ENCODE measurements at regions of chr1 and their contacts with region 1.

Region 1: DNA sequence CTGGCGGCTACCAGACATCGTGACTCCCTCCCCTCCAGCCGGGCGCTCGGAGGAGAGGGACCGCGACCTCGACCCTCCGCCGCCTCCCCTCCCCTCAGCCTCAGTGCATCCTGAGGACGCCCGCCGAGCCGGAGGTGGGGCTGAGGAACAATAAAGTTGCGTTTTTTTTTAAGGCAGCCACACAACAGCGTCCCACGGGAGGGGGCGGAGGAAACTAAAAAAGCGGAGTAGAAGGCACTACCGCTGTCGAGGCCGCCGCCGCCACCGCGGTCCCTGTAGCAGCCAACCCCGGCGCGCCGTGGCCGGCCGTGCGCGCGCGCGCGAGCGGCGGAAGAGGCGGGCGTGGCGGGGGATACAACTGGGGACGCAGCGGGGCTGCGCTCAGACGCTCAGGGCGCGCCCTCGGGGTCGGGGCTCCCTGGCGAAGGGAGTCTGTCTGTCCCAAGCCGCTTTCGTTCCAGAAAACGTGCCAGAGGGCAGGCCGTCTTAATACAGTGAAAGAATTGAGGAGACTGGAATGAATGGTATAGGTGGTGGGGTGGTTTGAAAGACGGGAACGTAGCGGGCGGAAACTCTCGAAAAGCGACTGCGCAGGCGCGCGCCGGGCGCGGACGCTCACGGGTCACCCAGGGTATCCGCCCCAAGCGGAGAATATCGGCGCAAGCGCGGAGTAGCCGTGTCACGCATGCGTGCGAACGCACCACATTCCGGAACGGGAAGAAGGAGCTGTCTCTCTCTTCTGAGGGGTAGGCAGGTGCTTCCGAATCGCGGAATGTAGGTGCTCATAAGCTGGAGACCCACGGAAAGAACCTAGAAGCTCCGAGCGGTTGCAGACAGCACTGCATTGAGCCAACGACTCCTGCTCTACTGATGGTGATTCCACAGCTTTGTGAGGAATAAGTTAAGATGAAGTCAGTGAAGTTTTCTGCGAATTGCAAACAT is at the start of gene COP1:
- DNase-seq: peak; percentile 96 to 98
- H3K4me3 ChIP-seq: peak within 1 kb of the TSS; percentile 96
- H3K4me3 Mint-ChIP-seq: peak within 1 kb of the TSS; percentile 87
- H3K27ac Mint-ChIP-seq: peak within 1 kb of the TSS; percentile 95
- H3K4me1 ChIP-seq: peaks cover 8% of the 10 kb centered on the region
- H3K4me1 Mint-ChIP-seq: peaks cover 14% of the 10 kb centered on the region
- H3K27me3 ChIP-seq: no peaks in the 10 kb centered on the region
- H3K27me3 Mint-ChIP-seq: no peaks in the 10 kb centered on the region
- CTCF ChIP-seq: no peak
- total RNA-seq, gene COP1: 45.9 and 46.9 TPM in 2 replicates

Region 2: GRCh38 chr1:175839678-175840669 is 367.3 kb before region 1 on chr1:
- CTCF ChIA-PET with region 1: no interaction called
- POLR2A ChIA-PET with region 1: no interaction called
- intact Hi-C with region 1: loop called (anchors 5 kb)
- DNase-seq: peak; percentile 51 to 75
- H3K4me3 ChIP-seq: peak overlapping the region; percentile 27
- H3K4me3 Mint-ChIP-seq: peak overlapping the region; percentile 78
- H3K27ac Mint-ChIP-seq: peak overlapping the region; percentile 24
- H3K4me1 ChIP-seq: peaks cover 32% of the 10 kb centered on the region
- H3K4me1 Mint-ChIP-seq: peaks cover 42% of the 10 kb centered on the region
- H3K27me3 ChIP-seq: no peaks in the 10 kb centered on the region
- H3K27me3 Mint-ChIP-seq: peaks cover 4% of the 10 kb centered on the region
- CTCF ChIP-seq: no peak

Region 3: DNA sequence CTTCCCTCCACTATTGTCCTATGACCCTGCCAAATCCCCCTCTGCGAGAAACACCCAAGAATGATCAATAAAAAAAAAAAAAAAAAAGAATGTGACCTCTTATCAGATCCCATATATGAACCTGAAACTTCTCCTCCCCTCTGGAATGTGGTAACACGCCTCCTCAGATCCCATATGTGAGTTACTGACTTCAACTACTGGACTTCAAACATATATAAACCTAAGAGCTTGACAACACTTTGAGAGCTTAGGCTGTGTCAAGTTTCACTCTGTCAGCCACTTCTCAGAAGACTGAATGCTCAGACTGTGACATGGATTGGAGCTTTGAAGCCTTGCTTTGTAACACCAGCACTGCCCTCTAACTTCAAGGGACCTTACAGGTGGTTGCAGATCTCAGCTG is 148.5 kb before region 1 on chr1:
- CTCF ChIA-PET with region 1: no interaction called
- POLR2A ChIA-PET with region 1: interaction called, 3 read pairs
- intact Hi-C with region 1: loop called (anchors 1 kb)
- DNase-seq: peak; percentile 81 to 91
- H3K4me3 ChIP-seq: no peak overlapping the region
- H3K4me3 Mint-ChIP-seq: peak overlapping the region; percentile 35
- H3K27ac Mint-ChIP-seq: peak overlapping the region; percentile 15
- H3K4me1 ChIP-seq: peaks cover 36% of the 10 kb centered on the region
- H3K4me1 Mint-ChIP-seq: peaks cover 22% of the 10 kb centered on the region
- H3K27me3 ChIP-seq: no peaks in the 10 kb centered on the region
- H3K27me3 Mint-ChIP-seq: no peaks in the 10 kb centered on the region
- CTCF ChIP-seq: no peak

Region 4: GRCh38 chr1:176119549-176119948 is 87.7 kb before region 1 on chr1:
- CTCF ChIA-PET with region 1: no interaction called
- POLR2A ChIA-PET with region 1: interaction called, 3 read pairs
- intact Hi-C with region 1: loop called (anchors 1 kb)
- DNase-seq: peak in 1 of 2 experiments; percentile 11
- H3K4me3 ChIP-seq: no peak overlapping the region
- H3K4me3 Mint-ChIP-seq: no peak overlapping the region
- H3K27ac Mint-ChIP-seq: no peak overlapping the region
- H3K4me1 ChIP-seq: no peaks in the 10 kb centered on the region
- H3K4me1 Mint-ChIP-seq: no peaks in the 10 kb centered on the region
- H3K27me3 ChIP-seq: no peaks in the 10 kb centered on the region
- H3K27me3 Mint-ChIP-seq: no peaks in the 10 kb centered on the region
- CTCF ChIP-seq: peak; percentile 19 to 31

Region 5: DNA sequence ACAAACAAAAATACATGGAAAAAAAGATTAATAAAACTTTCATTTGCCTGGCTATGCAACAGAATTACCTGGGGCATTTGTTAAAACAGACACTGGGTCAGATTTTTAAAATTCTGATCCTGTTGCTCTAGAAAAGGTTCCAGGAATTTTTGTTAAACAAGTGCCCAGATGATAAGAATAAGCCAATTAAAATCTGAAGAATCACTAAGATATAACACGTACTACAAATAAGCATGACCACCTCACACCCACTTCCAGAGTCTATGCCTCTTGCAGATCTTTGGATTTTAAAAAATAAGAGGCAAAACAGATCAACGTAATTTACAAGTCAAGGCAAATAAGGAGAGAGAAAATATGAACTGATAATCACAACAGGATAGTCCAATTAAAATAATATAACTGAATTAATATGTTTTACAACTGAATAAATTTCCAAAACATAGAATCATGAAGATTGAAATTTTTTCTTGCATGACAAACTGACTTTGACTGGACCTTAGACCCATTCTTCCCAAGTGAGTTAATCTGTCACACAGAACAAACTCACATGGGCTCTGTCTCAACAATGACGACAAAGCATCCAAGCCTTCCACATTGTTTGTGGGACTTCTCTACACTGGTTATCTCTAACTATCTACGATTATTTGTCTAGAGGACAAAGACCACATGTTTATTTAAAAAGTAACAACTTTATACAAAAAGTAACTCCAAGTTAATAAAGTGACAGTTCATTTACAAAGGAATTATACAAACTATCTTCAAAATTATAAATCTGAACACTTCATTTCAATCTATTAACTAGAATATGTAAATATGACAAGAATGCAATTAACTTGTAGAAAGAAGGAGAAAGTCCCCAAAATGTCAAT is 57.1 kb before region 1 on chr1:
- CTCF ChIA-PET with region 1: no interaction called
- POLR2A ChIA-PET with region 1: no interaction called
- intact Hi-C with region 1: loop called (anchors 2 kb)
- DNase-seq: peak; percentile 72 to 75
- H3K4me3 ChIP-seq: no peak overlapping the region; the same call in 1 of the 2 replicates
- H3K4me3 Mint-ChIP-seq: peak overlapping the region; percentile 71
- H3K27ac Mint-ChIP-seq: peak overlapping the region; percentile 43
- H3K4me1 ChIP-seq: peaks cover 39% of the 10 kb centered on the region
- H3K4me1 Mint-ChIP-seq: peaks cover 8% of the 10 kb centered on the region
- H3K27me3 ChIP-seq: no peaks in the 10 kb centered on the region
- H3K27me3 Mint-ChIP-seq: no peaks in the 10 kb centered on the region
- CTCF ChIP-seq: no peak

Region 6: DNA sequence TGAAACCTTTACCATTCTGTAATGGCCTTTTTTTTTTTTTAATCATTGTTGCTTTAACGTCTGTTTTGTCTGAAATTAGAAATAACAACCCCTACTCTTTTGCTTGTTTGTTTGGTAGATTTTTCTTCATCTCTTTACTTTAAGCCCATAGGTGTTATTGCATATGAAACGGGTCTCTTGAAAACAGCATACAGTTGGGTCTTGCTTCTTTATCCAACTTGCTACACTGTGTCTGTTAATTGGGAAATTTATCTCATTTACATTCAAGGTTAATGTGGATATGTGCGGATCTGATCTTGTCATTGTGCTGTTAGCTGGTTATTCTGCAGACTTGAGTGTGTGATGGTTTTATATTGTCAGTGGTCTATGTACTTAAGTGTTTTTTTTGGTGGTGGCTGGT is 78.8 kb after region 1 on chr1:
- CTCF ChIA-PET with region 1: no interaction called
- POLR2A ChIA-PET with region 1: no interaction called
- intact Hi-C with region 1: no loop called
- DNase-seq: no peak
- H3K4me3 ChIP-seq: no peak overlapping the region
- H3K4me3 Mint-ChIP-seq: no peak overlapping the region
- H3K27ac Mint-ChIP-seq: no peak overlapping the region
- H3K4me1 ChIP-seq: peaks cover 15% of the 10 kb centered on the region
- H3K4me1 Mint-ChIP-seq: peaks cover 7% of the 10 kb centered on the region
- H3K27me3 ChIP-seq: no peaks in the 10 kb centered on the region
- H3K27me3 Mint-ChIP-seq: no peaks in the 10 kb centered on the region
- CTCF ChIP-seq: no peak

Region 7: GRCh38 chr1:176315519-176316220 is 108.4 kb after region 1 on chr1:
- CTCF ChIA-PET with region 1: no interaction called
- POLR2A ChIA-PET with region 1: no interaction called
- intact Hi-C with region 1: loop called (anchors 10 kb)
- DNase-seq: no peak
- H3K4me3 ChIP-seq: no peak overlapping the region
- H3K4me3 Mint-ChIP-seq: no peak overlapping the region
- H3K27ac Mint-ChIP-seq: no peak overlapping the region
- H3K4me1 ChIP-seq: no peaks in the 10 kb centered on the region
- H3K4me1 Mint-ChIP-seq: no peaks in the 10 kb centered on the region
- H3K27me3 ChIP-seq: no peaks in the 10 kb centered on the region
- H3K27me3 Mint-ChIP-seq: peaks cover 7% of the 10 kb centered on the region
- CTCF ChIP-seq: no peak